Psoas muscle (tissue), 8 donors: ENCODE measurements at regions of chr3 and their contacts with region 1.

Region 1: GRCh38 chr3:16897254-16897926 is 12.6 kb downstream of the PLCL2 start:
- DNase-seq: no peak
- ATAC-seq: peak; percentile 70 to 79 (median 74)
- H3K4me3 ChIP-seq: peak overlapping the region; percentile 47
- H3K27ac ChIP-seq: peak overlapping the region; percentile 78
- H3K4me1 ChIP-seq: peaks cover 80% of the 10 kb centered on the region
- H3K27me3 ChIP-seq: no peaks in the 10 kb centered on the region
- CTCF ChIP-seq: no peak

Region 2: DNA sequence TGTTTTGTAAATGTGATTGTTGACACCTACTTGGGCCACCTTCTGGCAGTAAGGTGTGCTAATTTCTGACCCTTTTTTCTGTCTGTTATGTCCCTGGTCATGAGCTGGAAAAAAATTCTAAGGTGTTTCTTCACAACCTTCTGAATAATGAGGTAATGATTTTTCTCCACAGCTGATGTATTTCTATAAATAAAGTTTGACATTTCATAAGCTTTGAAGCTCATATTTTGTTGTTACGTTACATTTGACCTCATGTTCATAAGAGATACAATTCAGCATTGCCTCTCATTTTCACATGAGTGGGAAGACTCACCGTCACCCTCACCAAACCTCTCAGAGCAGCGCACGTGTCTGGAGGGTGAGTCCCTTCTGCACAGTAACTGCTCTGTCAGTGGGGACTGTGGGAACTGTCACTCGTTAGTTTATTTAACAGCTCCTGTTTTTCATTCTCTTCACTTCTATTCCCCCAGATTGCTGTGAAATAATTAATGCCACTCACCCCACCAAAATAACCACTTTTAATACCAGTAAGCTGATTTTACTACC is 128.3 kb after region 1 on chr3:
- intact Hi-C with region 1: loop called (anchors 2 to 5 kb)
- DNase-seq: no peak
- ATAC-seq: peak in 3 of 4 donors; percentile 58 to 67 (median 66)
- H3K4me3 ChIP-seq: no peak overlapping the region
- H3K27ac ChIP-seq: peak overlapping the region; percentile 38
- H3K4me1 ChIP-seq: peaks cover 11% of the 10 kb centered on the region
- H3K27me3 ChIP-seq: no peaks in the 10 kb centered on the region
- CTCF ChIP-seq: no peak

Region 3: GRCh38 chr3:17032407-17033034 is 135.1 kb after region 1 on chr3:
- intact Hi-C with region 1: loop called in 1 of 2 experiments (anchors 5 kb)
- DNase-seq: no peak
- ATAC-seq: peak; percentile 57 to 84 (median 72)
- H3K4me3 ChIP-seq: no peak overlapping the region
- H3K27ac ChIP-seq: peak overlapping the region; percentile 12
- H3K4me1 ChIP-seq: peaks cover 15% of the 10 kb centered on the region
- H3K27me3 ChIP-seq: no peaks in the 10 kb centered on the region
- CTCF ChIP-seq: peak; percentile 62

Region 4: GRCh38 chr3:17227472-17227871 is 330.1 kb after region 1 on chr3:
- intact Hi-C with region 1: loop called in 1 of 2 experiments (anchors 10 kb)
- DNase-seq: no peak
- ATAC-seq: no peak
- H3K4me3 ChIP-seq: no peak overlapping the region
- H3K27ac ChIP-seq: no peak overlapping the region
- H3K4me1 ChIP-seq: peaks cover 8% of the 10 kb centered on the region
- H3K27me3 ChIP-seq: no peaks in the 10 kb centered on the region
- CTCF ChIP-seq: no peak